ENCODE measurements at regions of chr15 and their contacts with region 1.

Region 1: DNA sequence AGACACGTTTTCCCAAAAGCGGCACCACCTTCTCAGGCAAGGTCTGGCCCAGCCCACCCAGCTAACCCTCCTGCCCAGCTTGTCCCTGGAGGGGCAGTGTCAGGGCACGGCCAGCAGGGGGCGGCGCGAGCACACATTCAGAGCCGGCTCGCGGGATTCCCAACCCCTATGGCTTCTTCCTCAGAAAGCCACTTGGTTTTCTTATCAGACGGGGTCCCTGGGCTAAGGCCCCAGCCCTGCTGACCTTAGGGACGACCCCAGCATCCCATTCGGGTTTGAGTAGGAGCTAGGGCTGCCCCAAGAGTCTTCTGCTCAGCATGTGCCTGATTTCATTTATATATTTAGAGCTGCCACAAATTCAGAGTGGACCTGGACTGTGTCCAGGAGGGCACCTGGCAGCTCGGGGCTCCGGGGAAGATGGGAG is 14.5 kb downstream of the RLBP1 start:
- DNase-seq: peak; percentile 78
- H3K4me3 ChIP-seq: no peak overlapping the region
- H3K27ac ChIP-seq: no peak overlapping the region
- H3K4me1 ChIP-seq: no peaks in the 10 kb centered on the region
- H3K27me3 ChIP-seq: no peaks in the 10 kb centered on the region
- CTCF ChIP-seq: peak; percentile 98

Region 2: DNA sequence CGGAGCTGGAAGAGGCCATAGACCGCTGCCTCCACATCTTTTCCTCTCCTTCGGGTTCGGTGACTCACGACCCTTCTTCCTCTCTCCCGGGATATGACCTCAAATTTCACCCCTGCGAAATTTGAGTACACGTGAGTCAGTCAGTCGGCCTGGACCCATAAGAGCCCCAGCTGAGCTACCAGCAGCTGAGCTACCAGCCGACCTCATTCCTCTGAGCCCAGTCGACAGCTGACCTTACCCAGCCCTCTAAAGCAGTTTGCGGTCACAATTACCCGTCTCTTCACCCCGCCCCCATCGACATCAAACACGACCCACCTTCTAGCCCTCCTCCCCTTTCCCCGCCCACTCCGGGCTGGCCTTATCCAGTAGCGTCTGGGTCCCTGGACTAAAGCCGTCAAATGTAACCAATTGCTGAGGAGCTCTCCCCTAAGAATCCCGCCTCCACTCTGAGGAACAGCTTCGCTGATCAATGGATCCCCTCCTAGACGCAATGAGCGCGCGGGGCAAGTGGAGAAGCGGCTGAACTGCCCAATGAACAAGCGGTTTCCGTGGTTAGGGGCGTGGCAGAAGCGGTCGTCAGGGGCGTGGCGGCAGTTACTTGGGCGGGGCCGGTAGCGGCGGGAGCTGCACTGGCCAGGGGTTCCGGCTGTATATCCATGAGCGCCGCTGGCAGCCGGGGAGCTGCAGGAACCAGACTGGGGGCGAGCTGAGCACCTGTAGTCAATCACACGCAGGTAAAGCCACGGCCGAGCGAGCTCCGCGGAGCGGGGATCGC is 118.9 kb before region 1 on chr15 and contains the start of gene ABHD2:
- intact Hi-C with region 1: no loop called
- DNase-seq: peak; percentile 100
- H3K4me3 ChIP-seq: peak within 1 kb of the TSS; percentile 71
- H3K27ac ChIP-seq: peak within 1 kb of the TSS; percentile 48
- H3K4me1 ChIP-seq: peaks cover 14% of the 10 kb centered on the region
- H3K27me3 ChIP-seq: no peaks in the 10 kb centered on the region
- CTCF ChIP-seq: no peak
- total RNA-seq, gene ABHD2: 71.5 to 86.7 TPM

Region 3: DNA sequence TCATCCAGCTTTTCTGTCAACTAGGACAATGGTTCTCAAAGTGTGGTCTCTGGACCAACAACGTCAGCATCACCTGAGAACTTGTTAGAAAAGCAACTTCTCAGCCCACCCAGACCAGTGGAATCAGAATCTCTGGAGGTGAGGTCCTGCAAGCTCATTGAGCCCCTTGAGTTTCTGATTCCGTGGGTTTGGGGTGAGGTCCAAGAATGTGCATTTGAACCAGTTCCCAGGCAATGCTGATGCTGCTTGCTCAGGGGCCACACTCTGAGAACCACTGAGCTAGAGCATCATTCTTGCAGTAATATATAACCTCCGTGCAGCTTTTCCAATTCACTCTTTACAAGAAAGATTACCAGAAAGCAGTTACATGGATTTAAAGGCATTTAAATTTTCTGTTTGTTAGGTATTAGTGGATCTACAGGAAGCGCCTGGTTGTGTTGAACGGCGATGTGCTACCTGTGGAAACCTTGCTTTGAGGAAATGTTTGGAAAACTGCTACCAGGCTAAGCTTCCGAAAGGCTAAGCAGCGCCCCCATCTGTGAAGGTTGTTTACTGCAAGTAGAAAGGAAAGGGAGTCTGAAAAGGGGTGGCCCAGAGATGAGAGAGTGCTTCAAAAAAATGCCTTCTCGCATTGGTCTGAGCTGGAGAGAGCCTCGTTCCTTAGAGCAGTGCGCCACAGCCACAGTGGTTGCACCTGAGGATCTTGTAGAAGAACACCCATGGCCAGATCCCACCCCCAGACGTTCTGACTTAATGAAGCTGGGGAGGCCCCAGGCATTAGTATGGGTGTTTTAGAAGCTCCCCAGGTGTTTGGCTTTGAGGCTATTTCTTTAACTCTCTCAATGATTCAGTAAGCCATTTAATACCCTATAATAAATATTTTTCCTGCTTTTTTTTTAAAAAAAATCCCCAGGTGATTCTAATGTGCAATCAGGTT is 35.5 kb before region 1 on chr15:
- intact Hi-C with region 1: no loop called
- DNase-seq: peak; percentile 73
- H3K4me3 ChIP-seq: no peak overlapping the region
- H3K27ac ChIP-seq: no peak overlapping the region
- H3K4me1 ChIP-seq: peaks cover 5% of the 10 kb centered on the region
- H3K27me3 ChIP-seq: no peaks in the 10 kb centered on the region
- CTCF ChIP-seq: peak; percentile 70

Region 4: GRCh38 chr15:89243691-89244471 is 37.0 kb after region 1 on chr15 and contains the start of gene FANCI:
- intact Hi-C with region 1: loop called (anchors 5 kb)
- DNase-seq: peak; percentile 98
- H3K4me3 ChIP-seq: peak within 1 kb of the TSS; percentile 66
- H3K27ac ChIP-seq: no peak within 1 kb of the TSS
- H3K4me1 ChIP-seq: no peaks in the 10 kb centered on the region
- H3K27me3 ChIP-seq: no peaks in the 10 kb centered on the region
- CTCF ChIP-seq: no peak
- total RNA-seq, gene FANCI: 19.9 to 76.9 TPM

Region 5: DNA sequence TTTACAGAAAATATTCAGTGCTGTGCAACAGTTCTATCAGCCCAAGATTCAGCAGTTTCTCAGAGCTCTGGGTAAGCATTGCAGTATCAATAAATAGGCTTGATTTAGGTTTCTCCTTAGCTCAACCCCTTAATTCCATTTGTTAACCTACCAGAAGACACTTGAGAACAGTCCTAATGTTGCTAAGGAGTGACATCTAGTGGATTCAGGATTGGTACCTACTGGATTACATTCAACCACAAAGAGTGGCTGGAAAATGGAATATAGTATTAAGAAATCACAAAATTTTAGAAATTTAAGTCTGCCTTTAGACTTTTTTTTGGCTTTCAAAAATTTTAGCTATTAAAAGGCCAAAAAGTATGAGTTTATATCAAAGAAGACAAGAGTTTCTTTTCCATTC is 93.0 kb after region 1 on chr15:
- intact Hi-C with region 1: loop called (anchors 5 kb)
- DNase-seq: no peak
- H3K4me3 ChIP-seq: no peak overlapping the region
- H3K27ac ChIP-seq: no peak overlapping the region
- H3K4me1 ChIP-seq: no peaks in the 10 kb centered on the region
- H3K27me3 ChIP-seq: no peaks in the 10 kb centered on the region
- CTCF ChIP-seq: no peak

Measured in colonic mucosa (tissue), 4 donors.